ENCODE measurements at regions of chr17 and their contacts with region 1.

Region 1: GRCh38 chr17:7687908-7688807 is at the start of gene WRAP53:
- DNase-seq: peak; percentile 98
- H3K4me3 ChIP-seq: peak within 1 kb of the TSS; percentile 97
- H3K27ac ChIP-seq: peak within 1 kb of the TSS; percentile 99
- H3K27me3 ChIP-seq: no peaks in the 10 kb centered on the region
- CTCF ChIP-seq: peak; percentile 97
- polyA plus RNA-seq, gene WRAP53: 4.1 and 4.5 TPM in 2 replicates

Region 2: DNA sequence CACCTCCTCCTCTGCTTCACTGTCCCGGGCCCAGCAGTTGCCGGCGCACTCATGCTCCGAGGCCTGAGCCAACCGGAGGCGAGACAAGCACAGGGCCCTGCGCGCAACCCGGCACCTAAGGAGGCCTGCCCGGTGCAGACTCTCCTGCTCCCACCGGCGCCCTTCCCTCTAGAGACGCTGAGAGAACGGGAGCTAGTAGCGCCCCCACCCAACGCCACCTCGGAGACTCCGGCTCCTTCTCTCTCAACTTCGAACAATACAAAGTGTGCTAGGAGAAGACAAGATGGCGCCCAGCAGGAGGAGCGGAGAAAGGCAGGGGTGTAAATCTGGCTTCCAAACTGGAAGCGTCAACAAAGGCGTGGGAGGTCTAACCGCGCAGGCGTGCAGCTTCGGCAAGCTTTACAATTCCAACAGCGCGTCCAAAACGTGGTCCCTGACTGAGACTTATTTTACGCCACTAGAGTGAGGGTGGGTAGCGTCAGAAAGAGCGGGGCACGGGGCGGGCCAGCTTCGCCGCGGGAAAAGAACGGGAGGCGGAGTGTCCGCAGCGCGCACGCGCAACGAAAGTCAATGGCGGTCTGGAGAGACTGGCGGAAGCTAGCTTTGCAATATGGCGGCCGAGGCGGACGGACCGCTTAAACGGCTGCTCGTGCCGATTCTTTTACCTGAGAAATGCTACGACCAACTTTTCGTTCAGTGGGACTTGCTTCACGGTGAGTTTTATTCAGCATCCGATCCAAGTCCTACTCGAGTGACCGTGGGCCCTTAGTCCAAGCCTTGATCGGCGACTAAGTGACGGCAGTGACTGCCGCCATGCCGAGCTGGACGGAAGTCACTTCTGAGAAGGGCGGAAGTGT is 104.7 kb before region 1 on chr17 and contains the start of gene MPDU1:
- CTCF ChIA-PET with region 1: interaction called, 39 read pairs
- POLR2A ChIA-PET with region 1: interaction called, 19 read pairs
- DNase-seq: peak; percentile 92
- H3K4me3 ChIP-seq: peak within 1 kb of the TSS; percentile 92
- H3K27ac ChIP-seq: peak within 1 kb of the TSS; percentile 97
- H3K27me3 ChIP-seq: no peaks in the 10 kb centered on the region
- CTCF ChIP-seq: no peak; the same call in 1 of the 2 replicates
- polyA plus RNA-seq, gene MPDU1: 128 and 131 TPM in 2 replicates

Region 3: GRCh38 chr17:7614422-7615264 is 73.5 kb before region 1 on chr17 and contains the start of gene FXR2:
- CTCF ChIA-PET with region 1: interaction called, 29 read pairs
- POLR2A ChIA-PET with region 1: interaction called, 20 read pairs
- DNase-seq: peak; percentile 100
- H3K4me3 ChIP-seq: peak within 1 kb of the TSS; percentile 86
- H3K27ac ChIP-seq: peak within 1 kb of the TSS; percentile 80
- H3K27me3 ChIP-seq: peaks cover under 1% of the 10 kb centered on the region
- CTCF ChIP-seq: peak; percentile 66
- polyA plus RNA-seq, gene FXR2: 24.6 and 29.4 TPM in 2 replicates

Region 4: DNA sequence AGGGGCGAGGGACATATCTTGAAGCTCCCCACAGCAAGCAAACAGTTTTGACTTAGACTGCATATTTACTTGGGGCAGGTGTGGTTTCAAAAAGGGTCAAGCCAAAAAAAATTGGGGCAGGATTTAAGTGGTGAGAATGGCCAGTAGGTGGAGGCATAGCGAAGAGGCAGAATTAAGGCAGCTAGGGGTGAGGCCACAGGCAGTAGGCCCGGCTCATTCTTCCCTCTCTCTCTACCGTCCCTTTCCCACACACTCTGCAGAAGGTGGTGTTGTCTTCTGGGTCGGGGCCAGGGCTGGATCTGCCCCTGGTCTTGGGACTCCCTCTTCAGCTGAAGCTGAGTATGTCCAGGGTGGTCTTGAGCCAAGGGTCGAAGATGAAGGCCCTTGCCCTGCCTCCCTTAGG is 55.7 kb before region 1 on chr17:
- CTCF ChIA-PET with region 1: interaction called, 134 read pairs
- POLR2A ChIA-PET with region 1: interaction called, 40 read pairs
- DNase-seq: no peak
- H3K4me3 ChIP-seq: no peak overlapping the region
- H3K27ac ChIP-seq: no peak overlapping the region
- H3K27me3 ChIP-seq: no peaks in the 10 kb centered on the region
- CTCF ChIP-seq: peak; percentile 68

Region 5: DNA sequence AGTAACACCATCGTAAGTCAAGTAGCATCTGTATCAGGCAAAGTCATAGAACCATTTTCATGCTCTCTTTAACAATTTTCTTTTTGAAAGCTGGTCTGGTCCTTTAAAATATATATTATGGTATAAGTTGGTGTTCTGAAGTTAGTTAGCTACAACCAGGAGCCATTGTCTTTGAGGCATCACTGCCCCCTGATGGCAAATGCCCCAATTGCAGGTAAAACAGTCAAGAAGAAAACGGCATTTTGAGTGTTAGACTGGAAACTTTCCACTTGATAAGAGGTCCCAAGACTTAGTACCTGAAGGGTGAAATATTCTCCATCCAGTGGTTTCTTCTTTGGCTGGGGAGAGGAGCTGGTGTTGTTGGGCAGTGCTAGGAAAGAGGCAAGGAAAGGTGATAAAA is 14.9 kb before region 1 on chr17:
- CTCF ChIA-PET with region 1: interaction called, 29 read pairs
- POLR2A ChIA-PET with region 1: interaction called, 3 read pairs
- DNase-seq: no peak
- H3K4me3 ChIP-seq: no peak overlapping the region
- H3K27ac ChIP-seq: no peak overlapping the region
- H3K27me3 ChIP-seq: no peaks in the 10 kb centered on the region
- CTCF ChIP-seq: peak; percentile 48

Measured in AG04450 (cell line).